ENCODE measurements at regions of chr13 and their contacts with region 1.

Region 1: DNA sequence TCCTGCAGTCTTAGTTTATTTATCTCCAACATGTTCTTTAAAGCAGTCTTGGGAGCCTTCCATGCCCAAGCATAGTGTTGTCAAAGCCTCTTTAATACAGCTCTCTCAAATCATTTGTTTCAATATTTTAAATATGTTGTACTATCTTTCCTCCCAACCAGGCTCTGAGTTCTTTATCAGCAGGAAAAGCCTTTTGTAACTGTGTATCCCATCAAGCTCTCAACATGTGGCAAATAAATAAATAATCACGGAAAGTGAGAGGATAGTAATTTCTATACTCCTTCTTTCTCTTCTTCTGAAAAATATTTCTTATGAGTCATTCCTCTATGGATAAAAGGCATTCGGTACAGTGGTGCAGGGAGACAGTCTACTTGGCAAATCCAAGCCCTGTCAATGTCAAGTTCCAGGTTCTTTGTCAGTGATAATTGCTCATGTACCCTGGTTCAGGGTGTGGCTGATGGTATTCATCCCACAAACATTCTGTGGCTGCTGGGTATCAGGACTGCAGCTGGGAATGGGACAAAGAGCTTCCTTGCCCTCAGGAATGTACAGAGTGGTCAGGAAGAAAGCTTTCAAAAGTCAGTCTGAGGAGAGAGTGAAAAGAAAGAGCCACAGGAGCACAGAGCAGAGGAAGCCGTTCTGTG is 384.3 kb downstream of the EFNB2 start:
- DNase-seq: peak; percentile 79 to 99
- H3K4me3 ChIP-seq: no peak overlapping the region
- H3K27ac ChIP-seq: peak overlapping the region; percentile 94
- H3K4me1 ChIP-seq: peaks cover 48% of the 10 kb centered on the region
- H3K27me3 ChIP-seq: no peaks in the 10 kb centered on the region
- CTCF ChIP-seq: no peak

Region 2: DNA sequence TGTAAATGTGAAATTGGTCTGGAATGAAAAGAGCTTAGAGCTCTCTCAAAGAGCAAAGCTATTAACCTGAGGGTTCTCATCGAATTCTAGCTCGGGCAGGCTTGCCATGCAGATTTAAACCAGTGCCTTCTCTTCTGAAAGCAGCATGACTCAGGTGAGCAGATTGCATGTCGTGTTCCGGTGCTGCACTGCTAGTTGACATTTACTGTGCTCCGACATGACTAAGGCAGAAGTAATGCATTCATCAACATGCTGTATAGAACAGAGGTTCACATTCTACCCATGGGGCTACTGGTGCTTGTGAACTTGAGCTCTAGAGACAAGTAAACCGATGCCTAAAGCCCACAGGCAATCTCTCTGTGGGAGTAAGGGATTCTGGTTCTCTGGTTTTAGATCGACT is 563.4 kb before region 1 on chr13:
- CTCF ChIA-PET with region 1: no interaction called
- POLR2A ChIA-PET with region 1: no interaction called
- intact Hi-C with region 1: loop called (anchors 5 kb)
- DNase-seq: peak; percentile 48 to 59
- H3K4me3 ChIP-seq: no peak overlapping the region
- H3K27ac ChIP-seq: no peak overlapping the region
- H3K4me1 ChIP-seq: peaks cover 12% of the 10 kb centered on the region
- H3K27me3 ChIP-seq: no peaks in the 10 kb centered on the region
- CTCF ChIP-seq: no peak

Region 3: DNA sequence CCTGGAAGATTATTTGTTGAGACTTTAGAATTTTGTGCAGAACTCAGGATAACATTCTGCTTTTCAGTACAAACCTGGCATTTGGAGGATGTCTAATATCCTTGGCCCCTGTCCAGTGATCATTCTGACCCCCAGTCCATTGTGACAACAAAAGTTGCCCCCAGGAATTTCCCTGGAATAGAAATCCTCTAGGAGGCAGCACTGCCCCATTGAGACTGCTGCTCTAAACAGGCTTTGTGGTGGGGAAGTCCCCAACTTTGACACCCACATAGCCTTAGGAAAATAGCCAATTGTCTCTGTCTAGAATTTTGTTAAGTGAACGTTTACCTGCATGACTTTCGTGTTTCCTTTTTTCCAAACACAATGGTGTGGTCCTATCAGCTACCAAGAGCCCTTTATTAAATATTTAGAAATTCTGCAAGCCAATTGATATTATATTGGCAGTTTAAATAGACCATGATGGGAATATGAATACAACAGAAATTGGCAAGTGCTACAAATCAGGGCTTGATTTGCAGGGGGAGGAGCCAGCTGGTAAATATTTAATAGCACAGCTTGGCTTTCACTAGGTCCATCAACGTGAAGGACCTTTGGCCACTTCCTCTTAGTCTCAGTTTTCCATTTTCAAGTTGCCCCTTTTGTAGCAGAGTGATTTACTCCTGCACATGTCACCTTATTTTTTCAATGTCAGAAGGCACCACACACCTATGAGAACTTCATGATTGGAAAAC is 67.4 kb before region 1 on chr13:
- CTCF ChIA-PET with region 1: no interaction called
- POLR2A ChIA-PET with region 1: no interaction called
- intact Hi-C with region 1: no loop called
- DNase-seq: peak; percentile 25 to 44
- H3K4me3 ChIP-seq: no peak overlapping the region
- H3K27ac ChIP-seq: no peak overlapping the region
- H3K4me1 ChIP-seq: no peaks in the 10 kb centered on the region
- H3K27me3 ChIP-seq: no peaks in the 10 kb centered on the region
- CTCF ChIP-seq: peak; percentile 68

Region 4: DNA sequence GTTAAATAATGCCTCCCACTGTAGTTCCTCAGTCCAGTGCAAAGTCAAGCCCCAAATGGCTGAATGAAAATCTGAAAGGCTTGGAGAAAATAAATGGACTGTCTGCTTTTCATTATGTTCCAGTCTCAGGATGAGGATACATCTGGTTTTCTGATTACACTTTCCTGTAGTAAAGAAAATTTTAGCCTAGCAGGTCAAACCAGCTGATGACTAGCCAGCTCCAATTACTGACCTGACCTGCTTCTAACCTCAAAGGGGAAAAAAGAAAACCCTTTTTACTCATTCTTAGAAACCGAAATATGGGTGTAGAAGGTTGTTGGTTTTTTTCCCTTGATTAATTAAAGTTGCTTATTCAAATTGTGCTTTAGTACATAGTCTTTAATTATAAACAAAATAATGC is 34.1 kb before region 1 on chr13:
- CTCF ChIA-PET with region 1: interaction called, 3 read pairs
- POLR2A ChIA-PET with region 1: no interaction called
- intact Hi-C with region 1: loop called (anchors 1 kb)
- DNase-seq: peak in 1 of 2 experiments; percentile 69
- H3K4me3 ChIP-seq: peak overlapping the region; percentile 7; the same call in 1 of the 2 replicates
- H3K27ac ChIP-seq: peak overlapping the region; percentile 38
- H3K4me1 ChIP-seq: peaks cover 30% of the 10 kb centered on the region
- H3K27me3 ChIP-seq: no peaks in the 10 kb centered on the region
- CTCF ChIP-seq: no peak

Region 5: DNA sequence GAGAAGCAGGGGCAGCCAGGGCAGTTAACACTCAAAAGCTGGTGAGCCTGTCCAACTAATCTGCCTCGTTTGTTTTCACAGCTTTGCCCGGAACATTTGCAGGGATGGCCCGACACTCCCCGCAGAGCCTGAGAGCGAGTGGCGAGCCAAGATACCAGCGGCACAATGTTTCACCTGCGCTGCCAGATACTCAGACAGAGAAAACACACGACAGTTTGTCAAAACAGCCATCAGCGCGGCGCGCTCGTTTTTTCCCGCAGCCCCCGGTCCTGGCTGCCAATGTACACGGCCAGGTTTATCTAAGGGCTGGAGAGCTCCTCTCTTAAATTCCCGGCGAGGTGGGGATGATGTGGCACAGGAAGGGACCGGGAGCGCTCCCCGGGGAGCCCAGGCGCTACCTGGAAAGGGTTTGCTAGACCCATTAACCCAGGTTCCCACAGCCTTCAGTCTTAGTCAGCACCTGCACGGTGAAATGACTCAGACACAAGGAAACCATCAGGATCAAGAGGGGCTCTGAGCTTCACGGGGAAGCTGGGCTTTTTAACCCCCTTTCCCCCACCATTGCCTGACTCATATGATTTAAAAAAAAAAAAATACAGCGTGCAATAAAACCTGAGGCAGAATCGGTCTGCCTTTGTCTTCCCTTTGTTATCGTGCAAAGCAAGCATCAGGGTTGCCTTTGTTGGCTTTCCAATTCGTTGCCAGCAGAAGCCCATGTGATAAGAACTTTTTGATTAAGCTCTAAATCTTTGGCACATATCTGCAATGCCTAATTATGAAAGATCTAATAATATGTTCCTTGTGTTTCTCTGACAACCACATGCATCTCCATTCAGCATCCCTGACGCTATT is 198.1 kb after region 1 on chr13:
- CTCF ChIA-PET with region 1: no interaction called
- POLR2A ChIA-PET with region 1: interaction called, 3 read pairs
- intact Hi-C with region 1: loop called (anchors 2 kb)
- DNase-seq: peak; percentile 59 to 91
- H3K4me3 ChIP-seq: peak overlapping the region; percentile 52
- H3K27ac ChIP-seq: peak overlapping the region; percentile 84
- H3K4me1 ChIP-seq: peaks cover 40% of the 10 kb centered on the region
- H3K27me3 ChIP-seq: no peaks in the 10 kb centered on the region
- CTCF ChIP-seq: no peak

Region 6: GRCh38 chr13:106471957-106472543 is 320.9 kb after region 1 on chr13:
- CTCF ChIA-PET with region 1: interaction called, 3 read pairs
- POLR2A ChIA-PET with region 1: no interaction called
- intact Hi-C with region 1: loop called (anchors 1 kb)
- DNase-seq: peak; percentile 88 to 99
- H3K4me3 ChIP-seq: peak overlapping the region; percentile 41; the same call in 1 of the 2 replicates
- H3K27ac ChIP-seq: peak overlapping the region; percentile 91
- H3K4me1 ChIP-seq: peaks cover 31% of the 10 kb centered on the region
- H3K27me3 ChIP-seq: no peaks in the 10 kb centered on the region
- CTCF ChIP-seq: no peak

Measured in PC-9 (cell line).